Activated T-helper 1 cell treated with anti-CD3 and anti-CD28 coated beads, Interleukin-12 subunit alpha, Interleukin-12 subunit beta, Interleukin-2, Interleukin-4 antibody, amounts not matched to agents 30 ng/mL and 10 ng/mL and 1 ng/mL, durations not matched to agents 14 hours and 24 hours and 36 hours (primary cell): ENCODE measurements at regions of chr1 and their contacts with region 1.

Region 1: DNA sequence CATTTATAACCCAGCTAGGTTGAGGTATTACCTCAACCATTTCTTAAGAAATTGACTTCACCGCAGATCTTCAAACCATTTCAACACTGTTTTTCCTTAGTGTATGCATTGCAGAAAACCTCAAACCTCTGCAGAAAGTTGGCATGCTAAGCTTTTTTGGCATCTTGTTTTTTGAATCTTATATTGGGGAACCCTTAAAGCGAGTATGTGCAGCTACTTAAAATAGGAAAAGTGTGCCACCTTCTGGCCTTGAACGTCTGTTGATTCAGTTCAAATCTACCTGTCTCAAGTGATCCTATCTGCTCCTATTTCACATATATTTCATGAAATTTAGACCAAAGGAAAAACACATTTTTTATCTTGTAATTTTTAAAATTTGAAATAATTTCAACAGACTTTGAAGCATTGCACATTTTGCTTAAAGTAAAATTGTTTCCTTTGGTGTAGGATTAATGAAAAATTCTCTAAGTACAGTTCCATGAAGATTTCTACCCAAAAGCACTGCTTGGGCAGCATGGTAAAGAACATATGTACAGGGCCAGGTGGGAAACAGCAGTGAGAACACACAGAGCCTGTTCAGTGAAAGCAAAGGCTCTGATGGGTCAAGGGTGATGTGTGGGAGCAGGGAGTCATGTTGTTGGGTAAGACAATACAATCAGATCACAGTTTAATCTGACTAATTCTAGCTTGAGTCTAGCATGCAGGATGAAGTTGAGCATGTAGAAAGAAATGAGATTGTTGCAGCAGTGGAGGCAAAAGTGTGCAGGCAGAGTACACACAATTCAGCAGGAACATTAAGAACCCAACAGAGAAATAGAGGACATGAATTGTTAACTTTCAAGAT is 17.2 kb downstream of the HENMT1 start:
- DNase-seq: peak; percentile 30
- H3K4me3 Mint-ChIP-seq: peak overlapping the region; percentile 31
- H3K27ac Mint-ChIP-seq: peak overlapping the region; percentile 68
- H3K4me1 Mint-ChIP-seq: peaks cover 71% of the 10 kb centered on the region
- H3K27me3 Mint-ChIP-seq: no peaks in the 10 kb centered on the region

Region 2: DNA sequence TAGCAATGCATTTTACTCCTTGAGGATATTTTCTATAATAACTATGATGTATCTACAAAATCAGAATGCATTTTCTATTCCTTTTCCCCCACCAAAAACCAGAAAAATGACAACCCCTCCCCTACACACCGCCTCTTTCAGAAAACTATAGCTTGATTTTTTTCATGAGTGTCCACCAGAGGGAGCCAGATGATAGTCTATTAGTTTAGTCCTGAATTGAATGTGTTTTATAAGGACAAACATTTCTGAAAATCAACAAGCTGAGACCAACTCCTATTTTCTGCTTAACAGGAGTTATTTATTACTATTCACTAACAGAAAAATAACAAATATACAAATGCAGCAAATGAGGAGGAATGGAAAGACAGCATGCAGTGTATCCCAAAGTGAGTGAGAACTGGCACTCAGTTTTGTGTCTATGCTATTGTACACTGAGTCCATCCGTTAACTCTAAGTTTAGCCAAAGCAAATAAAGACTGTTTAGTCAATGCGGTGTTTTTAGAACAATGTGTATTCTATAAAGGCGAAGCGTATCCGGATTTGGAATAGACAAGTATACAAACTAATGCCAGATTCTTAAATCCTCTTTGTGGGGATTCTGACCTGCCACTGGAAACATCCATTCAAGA is 861.4 kb before region 1 on chr1:
- intact Hi-C with region 1: loop called (anchors 2 kb)
- DNase-seq: peak; percentile 16
- H3K4me3 Mint-ChIP-seq: no peak overlapping the region
- H3K27ac Mint-ChIP-seq: no peak overlapping the region
- H3K4me1 Mint-ChIP-seq: peaks cover 21% of the 10 kb centered on the region
- H3K27me3 Mint-ChIP-seq: no peaks in the 10 kb centered on the region

Region 3: GRCh38 chr1:108504447-108504846 is 139.3 kb before region 1 on chr1:
- intact Hi-C with region 1: loop called (anchors 2 kb)
- DNase-seq: no peak
- H3K4me3 Mint-ChIP-seq: no peak overlapping the region
- H3K27ac Mint-ChIP-seq: no peak overlapping the region
- H3K4me1 Mint-ChIP-seq: no peaks in the 10 kb centered on the region
- H3K27me3 Mint-ChIP-seq: peaks cover 41% of the 10 kb centered on the region

Region 4: DNA sequence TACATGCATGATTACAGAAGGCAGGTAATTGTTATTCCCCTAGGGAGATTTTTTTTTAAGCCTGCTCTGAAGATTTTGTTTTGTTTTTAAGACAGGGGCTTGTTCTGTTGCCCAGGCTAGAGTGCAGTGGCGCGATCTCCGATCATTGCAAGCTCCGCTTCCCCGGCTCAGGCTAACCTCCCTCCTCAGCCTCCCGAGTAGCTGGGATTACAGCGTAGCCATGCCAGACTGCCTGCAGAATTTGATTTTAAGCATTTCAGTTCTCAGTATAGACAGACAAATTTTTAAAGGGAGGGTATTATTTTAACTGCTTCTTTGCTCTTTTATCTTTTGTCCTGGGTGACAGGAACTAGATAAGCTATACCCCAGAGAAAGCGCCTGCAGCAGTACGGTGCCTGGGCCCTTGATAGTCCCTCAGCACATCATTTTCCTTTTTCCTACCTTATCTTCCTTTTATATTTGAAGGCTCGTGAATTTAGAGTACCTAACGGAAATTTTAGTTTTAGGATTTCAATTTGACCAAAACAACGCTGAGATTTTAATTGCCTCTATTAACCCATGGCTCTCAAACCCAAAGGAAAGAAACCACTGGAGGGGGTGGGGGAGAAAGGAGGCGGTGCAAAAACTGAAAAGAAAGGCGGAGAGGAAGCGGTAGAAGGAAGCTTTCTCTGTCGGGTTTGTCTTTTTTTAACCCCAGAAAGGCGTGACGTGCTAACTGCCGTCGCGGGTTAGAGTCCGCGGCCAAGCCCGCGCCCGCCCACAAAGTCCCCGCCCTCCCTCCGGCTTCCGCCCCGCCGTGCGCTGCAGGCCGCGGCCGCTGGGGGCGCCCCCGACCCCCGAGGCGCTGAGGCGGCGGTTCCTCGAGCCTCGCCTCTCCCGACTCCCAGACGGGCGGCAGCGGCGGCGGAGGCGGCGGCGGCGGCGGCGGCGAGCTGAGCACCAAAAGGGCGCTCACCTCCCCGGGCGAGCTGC is 84.2 kb before region 1 on chr1 and contains the start of gene EEIG2:
- intact Hi-C with region 1: loop called (anchors 1 kb)
- DNase-seq: peak; percentile 85
- H3K4me3 Mint-ChIP-seq: peak within 1 kb of the TSS; percentile 92
- H3K27ac Mint-ChIP-seq: peak within 1 kb of the TSS; percentile 83
- H3K4me1 Mint-ChIP-seq: peaks cover 31% of the 10 kb centered on the region
- H3K27me3 Mint-ChIP-seq: peaks cover 4% of the 10 kb centered on the region
- total RNA-seq, gene EEIG2: 16.7 and 18.5 TPM in 2 replicates

Region 5: GRCh38 chr1:108661030-108661620 is 17.4 kb after region 1 on chr1 and contains the start of gene HENMT1:
- intact Hi-C with region 1: loop called (anchors 1 kb)
- DNase-seq: peak; percentile 71
- H3K4me3 Mint-ChIP-seq: peak within 1 kb of the TSS; percentile 87
- H3K27ac Mint-ChIP-seq: peak within 1 kb of the TSS; percentile 97
- H3K4me1 Mint-ChIP-seq: peaks cover 49% of the 10 kb centered on the region
- H3K27me3 Mint-ChIP-seq: no peaks in the 10 kb centered on the region
- total RNA-seq, gene HENMT1: 17.9 and 20.7 TPM in 2 replicates

Region 6: DNA sequence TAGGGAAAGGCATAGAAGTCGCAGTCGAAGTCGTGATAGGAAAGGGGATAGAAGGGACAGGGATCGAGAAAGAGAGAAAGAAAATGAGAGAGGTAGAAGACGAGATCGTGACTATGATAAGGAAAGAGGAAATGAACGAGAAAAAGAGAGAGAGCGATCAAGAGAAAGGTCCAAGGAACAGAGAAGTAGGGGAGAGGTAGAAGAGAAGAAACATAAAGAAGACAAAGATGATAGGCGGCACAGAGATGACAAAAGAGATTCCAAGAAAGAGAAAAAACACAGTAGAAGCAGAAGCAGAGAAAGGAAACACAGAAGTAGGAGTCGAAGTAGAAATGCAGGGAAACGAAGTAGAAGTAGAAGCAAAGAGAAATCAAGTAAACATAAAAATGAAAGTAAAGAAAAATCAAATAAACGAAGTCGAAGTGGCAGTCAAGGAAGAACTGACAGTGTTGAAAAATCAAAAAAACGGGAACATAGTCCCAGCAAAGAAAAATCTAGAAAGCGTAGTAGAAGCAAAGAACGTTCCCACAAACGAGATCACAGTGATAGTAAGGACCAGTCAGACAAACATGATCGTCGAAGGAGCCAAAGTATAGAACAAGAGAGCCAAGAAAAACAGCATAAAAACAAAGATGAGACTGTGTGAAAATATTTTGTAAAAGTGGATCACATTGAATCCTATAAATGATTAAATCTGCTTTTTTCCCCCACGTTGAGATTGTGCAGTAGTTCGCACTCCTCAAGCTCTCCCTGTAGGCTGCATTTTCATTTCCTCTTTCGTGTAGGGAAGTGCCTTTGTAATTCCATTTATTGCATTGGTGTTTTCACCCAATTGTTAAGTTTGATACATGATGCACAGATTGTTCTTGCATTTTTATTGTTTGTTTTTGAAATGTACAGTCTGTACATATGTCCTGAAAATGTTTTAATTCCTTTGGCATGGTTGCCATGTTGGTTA is 55.9 kb after region 1 on chr1:
- intact Hi-C with region 1: no loop called
- DNase-seq: no peak
- H3K4me3 Mint-ChIP-seq: peak overlapping the region; percentile 70
- H3K27ac Mint-ChIP-seq: peak overlapping the region; percentile 75
- H3K4me1 Mint-ChIP-seq: peaks cover 63% of the 10 kb centered on the region
- H3K27me3 Mint-ChIP-seq: no peaks in the 10 kb centered on the region

Region 7: GRCh38 chr1:108897865-108898720 is 254.4 kb after region 1 on chr1:
- intact Hi-C with region 1: loop called (anchors 5 kb)
- DNase-seq: peak; percentile 10
- H3K4me3 Mint-ChIP-seq: no peak overlapping the region
- H3K27ac Mint-ChIP-seq: no peak overlapping the region
- H3K4me1 Mint-ChIP-seq: no peaks in the 10 kb centered on the region
- H3K27me3 Mint-ChIP-seq: no peaks in the 10 kb centered on the region